ENCODE measurements at regions of chr7 and their contacts with region 1.

Region 1: GRCh38 chr7:76201730-76202665 is at the start of gene SRRM3:
- DNase-seq: peak; percentile 97
- H3K4me3 Mint-ChIP-seq: no peak within 1 kb of the TSS
- H3K27ac Mint-ChIP-seq: no peak within 1 kb of the TSS
- H3K4me1 Mint-ChIP-seq: no peaks in the 10 kb centered on the region
- H3K27me3 Mint-ChIP-seq: peaks cover 5% of the 10 kb centered on the region
- total RNA-seq, gene SRRM3: 0.09 and 0.17 TPM in 2 replicates

Region 2: GRCh38 chr7:76179686-76180085 is 22.3 kb before region 1 on chr7:
- intact Hi-C with region 1: loop called (anchors 1 kb)
- DNase-seq: no peak
- H3K4me3 Mint-ChIP-seq: no peak overlapping the region
- H3K27ac Mint-ChIP-seq: no peak overlapping the region
- H3K4me1 Mint-ChIP-seq: peaks cover 3% of the 10 kb centered on the region
- H3K27me3 Mint-ChIP-seq: no peaks in the 10 kb centered on the region

Region 3: DNA sequence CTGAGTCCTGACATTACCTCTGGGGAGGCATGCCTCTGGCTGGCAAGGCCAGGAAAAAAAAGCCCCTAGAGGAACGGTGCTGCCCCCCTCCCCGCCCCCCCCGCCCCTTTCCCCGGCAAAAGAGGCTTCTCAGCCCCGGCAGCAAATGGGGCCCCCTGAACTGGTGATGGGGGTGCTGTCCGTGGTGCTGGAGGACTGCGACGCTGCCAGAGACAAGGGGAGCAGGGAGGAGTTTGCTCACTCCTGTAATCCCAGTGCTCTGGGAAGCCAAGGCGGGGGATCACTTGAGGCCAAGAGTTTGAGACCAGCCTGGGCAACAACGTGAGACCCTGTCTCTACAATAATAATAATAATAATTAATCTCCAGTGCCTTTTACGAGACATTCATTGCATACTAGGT is 23.4 kb after region 1 on chr7:
- intact Hi-C with region 1: loop called (anchors 1 kb)
- DNase-seq: peak; percentile 80
- H3K4me3 Mint-ChIP-seq: no peak overlapping the region
- H3K27ac Mint-ChIP-seq: no peak overlapping the region
- H3K4me1 Mint-ChIP-seq: no peaks in the 10 kb centered on the region
- H3K27me3 Mint-ChIP-seq: peaks cover 14% of the 10 kb centered on the region